ENCODE measurements at regions of chr4 and their contacts with region 1.

Region 1: GRCh38 chr4:139184129-139184528 is 7.1 kb upstream of the ELF2 start:
- DNase-seq: no peak
- ATAC-seq: no peak
- H3K4me3 Mint-ChIP-seq: no peak overlapping the region
- H3K27ac Mint-ChIP-seq: no peak overlapping the region
- H3K4me1 Mint-ChIP-seq: peaks cover 0 to 2% (median under 1%) of the 10 kb centered on the region in 4 donors
- H3K27me3 Mint-ChIP-seq: peaks cover 0 to 14% (median 2%) of the 10 kb centered on the region in 5 donors

Region 2: DNA sequence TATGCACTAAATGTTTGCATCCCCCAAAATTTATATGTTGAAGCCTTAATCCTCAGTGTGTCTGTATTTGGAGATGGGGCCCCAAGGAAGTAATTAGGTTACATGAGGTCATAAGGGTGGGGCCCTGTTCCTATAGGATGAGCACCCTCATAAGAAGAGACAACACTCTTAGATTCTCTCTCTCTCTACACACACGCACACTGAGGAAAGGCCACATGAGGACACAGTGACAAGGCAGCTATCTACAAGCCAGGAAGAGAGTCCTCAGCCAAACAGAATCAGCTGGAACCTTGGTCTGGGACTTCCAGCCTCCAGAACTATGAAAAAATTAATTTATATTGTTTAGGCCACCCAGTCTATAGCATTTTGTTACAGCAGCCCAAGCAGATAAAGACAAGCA is 237.8 kb before region 1 on chr4:
- POLR2A ChIA-PET with region 1: interaction called, 11 read pairs
- DNase-seq: no peak
- ATAC-seq: no peak
- H3K4me3 Mint-ChIP-seq: no peak overlapping the region
- H3K27ac Mint-ChIP-seq: no peak overlapping the region
- H3K4me1 Mint-ChIP-seq: peaks cover 0 to 3% (median 0%) of the 10 kb centered on the region in 4 donors
- H3K27me3 Mint-ChIP-seq: no peaks in the 10 kb centered on the region

Region 3: GRCh38 chr4:139167774-139168444 is 16.2 kb before region 1 on chr4:
- POLR2A ChIA-PET with region 1: no interaction called
- DNase-seq: no peak
- ATAC-seq: no peak
- H3K4me3 Mint-ChIP-seq: no peak overlapping the region
- H3K27ac Mint-ChIP-seq: no peak overlapping the region
- H3K4me1 Mint-ChIP-seq: peaks cover 0 to 13% (median 2%) of the 10 kb centered on the region in 4 donors
- H3K27me3 Mint-ChIP-seq: no peaks in the 10 kb centered on the region

Region 4: DNA sequence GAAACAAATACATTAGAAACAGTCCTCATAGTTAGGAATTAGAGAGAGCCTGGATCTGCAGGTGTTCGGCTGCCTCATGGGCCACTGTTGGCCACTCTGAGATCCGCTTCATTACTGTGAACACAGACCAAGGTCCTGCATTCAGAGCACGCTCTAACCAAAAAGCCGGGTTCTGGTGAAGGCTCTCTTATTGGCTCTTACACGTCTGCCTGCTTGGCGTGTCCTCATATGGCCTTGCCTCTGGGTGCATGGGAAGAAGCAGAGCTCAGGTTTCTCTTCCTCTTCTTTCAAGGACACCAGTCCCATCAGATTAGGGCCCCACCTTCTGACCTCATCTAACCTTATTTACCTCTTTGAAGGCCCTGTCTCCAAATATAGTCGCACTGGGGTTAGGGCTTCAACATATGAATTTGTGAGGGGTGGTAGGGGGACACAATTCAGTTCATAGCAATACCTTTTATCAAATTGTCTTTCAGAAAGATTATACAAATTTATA is 30.0 kb after region 1 on chr4:
- POLR2A ChIA-PET with region 1: no interaction called
- DNase-seq: peak in 1 of 10 donors; percentile 22
- ATAC-seq: no peak
- H3K4me3 Mint-ChIP-seq: no peak overlapping the region
- H3K27ac Mint-ChIP-seq: no peak overlapping the region
- H3K4me1 Mint-ChIP-seq: peaks cover 0 to 12% (median 2%) of the 10 kb centered on the region in 4 donors
- H3K27me3 Mint-ChIP-seq: peaks cover 0 to 3% (median 0%) of the 10 kb centered on the region in 5 donors

Region 5: DNA sequence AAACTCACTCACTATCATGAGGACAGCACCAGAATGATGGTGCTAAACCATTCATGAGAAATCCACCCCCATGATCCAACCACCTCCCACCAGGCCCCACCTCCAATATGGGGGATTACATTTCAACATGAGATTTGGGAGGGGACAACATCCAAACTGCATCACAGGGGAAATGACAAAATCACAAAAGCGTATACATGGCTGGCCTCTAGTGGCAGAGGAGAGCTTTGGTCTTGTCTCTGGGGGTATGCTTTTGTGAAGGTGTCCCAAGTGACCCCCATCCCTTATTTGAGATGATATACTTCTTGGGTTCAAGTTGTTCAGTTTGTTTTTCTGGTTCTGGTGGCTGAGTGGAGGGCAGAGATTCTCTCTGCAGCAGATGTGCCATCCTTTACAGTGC is 380.4 kb after region 1 on chr4:
- POLR2A ChIA-PET with region 1: no interaction called
- DNase-seq: no peak
- ATAC-seq: no peak
- H3K4me3 Mint-ChIP-seq: no peak overlapping the region
- H3K27ac Mint-ChIP-seq: no peak overlapping the region
- H3K4me1 Mint-ChIP-seq: peaks cover 5 to 20% (median 9%) of the 10 kb centered on the region in 4 donors
- H3K27me3 Mint-ChIP-seq: peaks cover 0 to 4% (median 2%) of the 10 kb centered on the region in 5 donors

Measured in naive thymus-derived CD8-positive, alpha-beta T cell (primary cell).